Calu3 (cell line): ENCODE measurements at regions of chr17 and their contacts with region 1.

Region 1: DNA sequence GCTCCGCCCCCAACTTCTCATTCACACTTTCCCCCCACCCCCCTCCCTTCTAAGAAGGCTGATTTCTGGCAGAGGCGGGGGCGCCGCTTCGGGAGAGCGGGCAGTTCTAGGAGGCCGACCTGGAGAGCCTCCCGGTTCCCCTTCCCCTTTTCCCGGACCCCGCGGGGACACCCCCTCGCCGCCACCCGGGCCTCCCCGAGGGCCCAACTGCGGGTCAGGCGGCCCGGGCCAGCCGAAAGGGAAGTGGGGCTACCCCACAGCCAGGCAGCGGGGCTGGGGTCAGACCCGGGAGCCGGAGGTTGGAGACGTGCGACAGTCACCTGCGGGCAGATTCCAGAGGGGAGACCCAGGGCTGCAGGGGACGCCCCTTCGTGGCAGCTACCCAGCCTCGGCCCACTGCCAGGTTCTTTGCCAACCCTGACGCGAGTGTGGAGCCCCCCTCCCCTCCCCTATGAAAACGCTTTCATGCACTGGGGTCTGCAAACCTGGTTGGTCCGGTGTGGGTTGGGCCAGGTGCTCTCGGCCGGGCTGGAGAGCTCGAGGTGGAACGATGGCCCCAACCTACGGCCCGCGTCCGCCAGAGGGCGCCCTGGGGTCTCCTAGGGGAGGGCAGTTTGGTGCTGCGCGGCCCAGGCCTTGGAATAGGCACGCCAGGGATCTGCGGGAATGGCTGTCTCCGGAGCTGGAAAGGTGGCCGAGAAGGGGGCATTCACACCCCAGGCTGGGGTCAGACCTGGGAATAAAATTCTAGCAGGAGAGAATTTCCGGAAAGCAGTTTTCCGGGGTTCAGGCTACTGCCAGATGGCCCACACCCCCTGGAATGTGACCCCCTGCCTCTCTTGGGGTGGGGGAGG is 721 bp upstream of the SOCS3 start:
- DNase-seq: peak; percentile 98
- H3K4me3 Mint-ChIP-seq: peak overlapping the region; percentile 86
- H3K27ac Mint-ChIP-seq: no peak overlapping the region
- H3K4me1 Mint-ChIP-seq: peaks cover 16% of the 10 kb centered on the region
- H3K27me3 Mint-ChIP-seq: peaks cover under 1% of the 10 kb centered on the region
- CTCF ChIP-seq: peak; percentile 84

Region 2: DNA sequence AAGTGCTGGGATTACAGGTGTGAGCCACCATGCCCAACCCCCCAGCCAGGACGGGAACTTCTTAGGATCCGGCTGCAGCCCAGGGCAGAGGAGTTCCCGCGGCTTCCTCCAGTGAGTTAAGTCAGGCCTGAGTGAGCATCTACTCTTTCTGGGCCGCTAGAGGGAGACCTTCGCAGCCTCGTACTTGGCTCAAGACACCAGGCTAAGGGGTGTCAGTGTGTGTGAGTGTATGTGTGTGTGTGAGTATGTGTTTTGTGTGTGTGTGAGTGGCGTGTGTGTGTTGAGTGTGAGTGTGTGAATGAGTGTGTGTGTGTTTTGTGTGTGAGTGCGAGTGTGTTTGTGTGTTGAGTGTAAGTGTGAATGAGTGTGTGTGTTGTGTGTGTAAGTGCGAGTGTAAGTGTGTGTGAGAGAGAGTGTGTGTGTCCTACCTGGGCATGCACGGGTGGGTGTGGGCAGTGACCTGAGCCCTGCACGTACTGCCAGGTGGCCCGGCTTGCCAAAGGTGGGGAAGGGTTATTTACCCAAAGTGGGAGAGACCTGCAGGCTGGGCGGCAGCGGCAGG is 70.7 kb before region 1 on chr17:
- CTCF ChIA-PET with region 1: interaction called, 7 read pairs
- intact Hi-C with region 1: loop called (anchors 2 kb)
- DNase-seq: peak; percentile 78
- H3K4me3 Mint-ChIP-seq: no peak overlapping the region
- H3K27ac Mint-ChIP-seq: no peak overlapping the region
- H3K4me1 Mint-ChIP-seq: no peaks in the 10 kb centered on the region
- H3K27me3 Mint-ChIP-seq: no peaks in the 10 kb centered on the region
- CTCF ChIP-seq: peak; percentile 74

Region 3: GRCh38 chr17:78313735-78314648 is 46.6 kb before region 1 on chr17:
- CTCF ChIA-PET with region 1: interaction called, 32 read pairs
- intact Hi-C with region 1: loop called (anchors 5 kb)
- DNase-seq: peak; percentile 98
- H3K4me3 Mint-ChIP-seq: peak overlapping the region; percentile 67
- H3K27ac Mint-ChIP-seq: peak overlapping the region; percentile 47
- H3K4me1 Mint-ChIP-seq: peaks cover 53% of the 10 kb centered on the region
- H3K27me3 Mint-ChIP-seq: no peaks in the 10 kb centered on the region
- CTCF ChIP-seq: no peak

Region 4: GRCh38 chr17:78421484-78422266 is 61.1 kb after region 1 on chr17:
- CTCF ChIA-PET with region 1: interaction called, 31 read pairs
- intact Hi-C with region 1: loop called (anchors 1 kb)
- DNase-seq: peak; percentile 86
- H3K4me3 Mint-ChIP-seq: no peak overlapping the region
- H3K27ac Mint-ChIP-seq: no peak overlapping the region
- H3K4me1 Mint-ChIP-seq: no peaks in the 10 kb centered on the region
- H3K27me3 Mint-ChIP-seq: no peaks in the 10 kb centered on the region
- CTCF ChIP-seq: peak; percentile 93

Region 5: DNA sequence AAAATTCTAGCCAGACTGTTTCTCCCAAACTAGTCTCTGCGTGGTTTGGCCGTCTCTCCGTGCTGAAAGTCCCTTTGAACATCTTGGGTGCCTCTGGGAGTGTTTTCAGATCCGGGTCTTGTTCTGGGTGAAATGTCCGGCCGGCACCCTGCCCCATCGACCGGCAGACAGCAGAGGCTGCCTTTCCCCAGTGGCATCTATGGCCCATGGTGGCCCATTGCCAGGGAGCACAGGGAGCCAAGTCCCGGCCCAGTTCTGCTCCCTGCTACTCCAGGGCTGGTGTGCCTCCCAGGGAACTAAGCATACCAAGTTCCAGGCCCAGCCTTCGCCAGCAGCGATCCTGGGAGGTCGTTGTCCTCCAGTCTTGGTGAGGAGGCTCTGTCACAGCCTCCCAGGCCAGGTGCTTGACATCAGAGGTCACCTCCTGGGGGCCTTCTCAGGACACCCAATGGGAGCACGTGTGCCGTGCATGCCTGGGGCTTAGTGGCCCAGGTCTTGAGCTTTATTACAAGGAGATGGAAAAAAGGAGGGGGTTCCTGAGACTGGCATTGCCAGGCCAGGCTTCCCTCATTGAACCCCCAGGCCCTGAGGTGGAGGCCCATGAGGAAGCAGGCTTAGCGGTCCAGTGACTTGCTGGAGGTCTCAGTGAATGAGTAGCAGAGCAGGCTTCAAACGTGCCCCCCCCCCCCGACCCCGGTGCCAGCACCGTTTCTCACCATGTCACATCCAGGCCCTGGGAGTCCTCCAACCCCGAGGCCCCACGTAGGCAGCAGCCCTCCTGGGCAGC is 71.8 kb after region 1 on chr17:
- CTCF ChIA-PET with region 1: no interaction called
- intact Hi-C with region 1: no loop called
- DNase-seq: no peak
- H3K4me3 Mint-ChIP-seq: no peak overlapping the region
- H3K27ac Mint-ChIP-seq: no peak overlapping the region
- H3K4me1 Mint-ChIP-seq: no peaks in the 10 kb centered on the region
- H3K27me3 Mint-ChIP-seq: peaks cover 21% of the 10 kb centered on the region
- CTCF ChIP-seq: no peak